ENCODE measurements at regions of chr1 and their contacts with region 1.

Region 1: DNA sequence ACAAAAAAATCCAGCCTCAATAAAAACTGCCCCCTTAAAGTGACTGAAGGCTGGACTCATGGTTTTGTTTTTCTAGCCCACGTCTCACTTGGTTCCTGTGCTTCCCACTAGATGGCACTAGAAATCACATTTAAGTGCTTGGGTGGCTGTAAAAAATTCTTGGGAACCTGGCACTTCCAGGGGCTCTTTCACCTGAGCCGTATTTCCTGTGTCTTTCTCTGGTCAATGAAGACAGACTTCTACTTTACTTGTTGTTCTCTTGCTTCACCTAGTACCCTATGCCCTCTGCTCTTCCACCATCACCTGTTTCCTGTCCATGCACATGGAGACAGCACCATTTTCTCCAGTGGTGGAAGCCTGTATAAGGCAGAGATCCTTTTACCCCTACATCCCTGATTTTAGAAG is 20.0 kb downstream of the METTL13 start:
- DNase-seq: no peak
- H3K4me3 Mint-ChIP-seq: no peak overlapping the region
- H3K27ac Mint-ChIP-seq: no peak overlapping the region
- H3K4me1 Mint-ChIP-seq: peaks cover 6% of the 10 kb centered on the region
- H3K27me3 Mint-ChIP-seq: no peaks in the 10 kb centered on the region

Region 2: GRCh38 chr1:171699531-171699930 is 102.0 kb before region 1 on chr1:
- CTCF ChIA-PET with region 1: no interaction called
- POLR2A ChIA-PET with region 1: no interaction called
- DNase-seq: no peak
- H3K4me3 Mint-ChIP-seq: no peak overlapping the region
- H3K27ac Mint-ChIP-seq: no peak overlapping the region
- H3K4me1 Mint-ChIP-seq: no peaks in the 10 kb centered on the region
- H3K27me3 Mint-ChIP-seq: no peaks in the 10 kb centered on the region

Region 3: DNA sequence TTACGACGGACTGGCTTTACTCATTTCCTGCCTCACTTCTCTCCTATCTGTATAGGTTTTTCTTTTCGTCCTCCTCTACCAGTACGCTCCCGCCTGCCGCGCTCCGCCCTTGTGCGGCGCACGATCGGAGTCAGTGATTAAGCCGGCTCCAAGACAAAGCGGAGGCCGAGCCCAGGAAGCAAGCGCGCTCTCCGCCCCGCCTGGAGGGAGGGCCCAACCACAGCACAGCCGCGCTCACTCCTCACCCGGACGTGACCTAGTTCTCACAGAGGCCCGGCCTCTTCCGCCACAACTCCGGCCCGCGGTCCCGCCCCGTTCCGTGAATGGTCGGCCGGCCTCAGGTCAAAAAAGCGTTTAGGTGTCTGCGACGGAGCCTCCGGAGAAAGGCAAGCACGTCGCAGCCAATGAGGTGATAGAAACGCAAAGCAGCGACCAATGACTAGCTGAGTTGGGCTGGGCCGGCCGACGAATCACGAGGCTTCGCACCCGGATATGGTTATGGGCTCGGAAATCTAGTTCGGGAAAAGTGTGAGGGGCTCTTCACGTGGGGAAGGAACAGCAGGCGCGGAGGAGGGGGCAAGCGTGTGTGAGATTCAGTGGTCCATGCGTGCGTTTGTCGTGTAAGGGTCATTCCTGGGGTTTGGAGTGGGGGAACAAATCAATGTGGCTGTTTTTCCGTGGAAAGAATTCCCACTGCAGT is 20.2 kb before region 1 on chr1 and contains the start of gene METTL13:
- CTCF ChIA-PET with region 1: interaction called, 25 read pairs
- POLR2A ChIA-PET with region 1: interaction called, 7 read pairs
- DNase-seq: peak; percentile 99
- H3K4me3 Mint-ChIP-seq: peak within 1 kb of the TSS; percentile 94
- H3K27ac Mint-ChIP-seq: peak within 1 kb of the TSS; percentile 91
- H3K4me1 Mint-ChIP-seq: peaks cover 63% of the 10 kb centered on the region
- H3K27me3 Mint-ChIP-seq: no peaks in the 10 kb centered on the region
- total RNA-seq, gene METTL13: 42.9 to 44.5 TPM

Region 4: GRCh38 chr1:171841050-171841940 is 39.8 kb after region 1 on chr1 and contains the start of gene DNM3:
- CTCF ChIA-PET with region 1: interaction called, 20 read pairs
- POLR2A ChIA-PET with region 1: interaction called, 3 read pairs
- DNase-seq: peak; percentile 82
- H3K4me3 Mint-ChIP-seq: peak within 1 kb of the TSS; percentile 81
- H3K27ac Mint-ChIP-seq: peak within 1 kb of the TSS; percentile 25
- H3K4me1 Mint-ChIP-seq: peaks cover 17% of the 10 kb centered on the region
- H3K27me3 Mint-ChIP-seq: peaks cover 28% of the 10 kb centered on the region
- total RNA-seq, gene DNM3: 2.0 to 2.2 TPM

Region 5: DNA sequence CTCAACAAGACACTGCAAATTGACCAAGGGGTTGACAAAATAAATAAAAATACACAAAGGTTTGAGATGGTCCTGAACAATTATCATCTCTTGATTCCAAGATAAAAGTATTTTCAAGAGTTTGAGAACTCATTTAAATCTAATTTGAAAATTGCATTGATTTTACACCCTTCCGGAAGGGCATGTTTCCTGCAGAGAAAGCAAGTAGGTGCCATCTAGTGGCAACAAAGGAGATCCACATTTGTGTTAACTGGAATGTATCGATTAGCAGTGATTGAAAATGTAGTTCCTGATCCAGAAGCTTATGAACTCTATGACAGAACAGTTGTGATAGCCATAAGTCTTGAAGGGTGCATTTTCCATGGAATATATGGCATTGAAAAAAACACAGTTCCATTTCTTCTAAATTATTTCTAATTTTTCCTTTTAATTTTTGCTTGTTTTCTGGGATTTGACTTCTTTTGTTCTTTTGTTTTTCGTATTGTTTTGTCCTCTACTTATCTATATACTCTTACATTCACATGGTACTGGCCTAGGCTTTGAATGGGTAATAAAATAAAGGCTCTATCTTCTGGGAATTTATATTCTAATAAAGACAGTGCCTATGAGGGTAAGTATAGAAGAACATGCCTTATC is 183.5 kb after region 1 on chr1:
- CTCF ChIA-PET with region 1: interaction called, 122 read pairs
- POLR2A ChIA-PET with region 1: interaction called, 3 read pairs
- DNase-seq: no peak
- H3K4me3 Mint-ChIP-seq: no peak overlapping the region
- H3K27ac Mint-ChIP-seq: no peak overlapping the region
- H3K4me1 Mint-ChIP-seq: no peaks in the 10 kb centered on the region
- H3K27me3 Mint-ChIP-seq: peaks cover 4% of the 10 kb centered on the region